SK-N-SH (cell line): ENCODE measurements at regions of chr2 and their contacts with region 1.

Region 1: GRCh38 chr2:217650716-217651360 is 352.0 kb downstream of the TNS1 start:
- DNase-seq: peak; percentile 55
- H3K4me3 ChIP-seq: no peak overlapping the region
- H3K27ac ChIP-seq: no peak overlapping the region
- H3K4me1 ChIP-seq: peaks cover 0 to 16% of the 10 kb centered on the region in 2 experiments; a peak in 2 of 4 replicates
- H3K27me3 ChIP-seq: no peaks in the 10 kb centered on the region
- CTCF ChIP-seq: peak; percentile 74
- EP300 ChIP-seq: no peak
- RAD21 ChIP-seq: peak; percentile 66

Region 2: GRCh38 chr2:216450784-216451183 is 1200.1 kb before region 1 on chr2:
- CTCF ChIA-PET with region 1: no interaction called
- POLR2A ChIA-PET with region 1: no interaction called
- DNase-seq: no peak
- H3K4me3 ChIP-seq: no peak overlapping the region
- H3K27ac ChIP-seq: no peak overlapping the region
- H3K4me1 ChIP-seq: no peaks in the 10 kb centered on the region
- H3K27me3 ChIP-seq: no peaks in the 10 kb centered on the region
- CTCF ChIP-seq: no peak
- EP300 ChIP-seq: no peak
- RAD21 ChIP-seq: no peak

Region 3: DNA sequence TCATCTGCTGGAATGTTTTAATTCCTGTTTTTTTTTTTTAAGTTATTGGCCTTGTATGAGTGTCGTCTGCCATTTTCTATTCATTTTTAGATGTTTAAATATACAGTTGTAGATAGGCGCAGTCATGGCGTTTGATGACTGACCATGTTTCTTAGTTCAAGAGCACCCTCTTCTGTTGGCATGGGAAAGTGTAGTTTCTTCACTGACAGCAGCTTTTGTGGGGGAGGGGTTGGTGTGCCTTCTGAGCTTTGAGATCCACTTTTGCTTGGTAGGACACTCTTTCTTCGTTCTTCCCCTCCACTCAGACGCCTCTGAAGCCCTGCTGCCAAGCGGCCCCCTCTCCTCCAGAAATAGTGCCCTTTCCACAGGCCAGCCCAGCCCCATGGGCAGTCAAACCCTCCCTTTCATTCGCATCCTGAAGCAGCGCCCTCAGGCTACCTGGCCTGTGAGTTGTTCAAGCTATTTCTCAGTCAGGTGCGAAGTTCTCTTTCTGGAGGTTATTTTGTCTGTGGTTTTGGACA is 140.0 kb before region 1 on chr2:
- CTCF ChIA-PET with region 1: interaction called, 14 read pairs
- POLR2A ChIA-PET with region 1: no interaction called
- DNase-seq: peak; percentile 78
- H3K4me3 ChIP-seq: no peak overlapping the region; a peak in 1 of 4 replicates
- H3K27ac ChIP-seq: peak overlapping the region in 1 of 2 experiments; percentile 48; a peak in 1 of 4 replicates
- H3K4me1 ChIP-seq: peaks cover 8 to 11% of the 10 kb centered on the region in 2 experiments; a peak in 3 of 4 replicates
- H3K27me3 ChIP-seq: no peaks in the 10 kb centered on the region
- CTCF ChIP-seq: peak; percentile 77
- EP300 ChIP-seq: no peak
- RAD21 ChIP-seq: peak; percentile 99

Region 4: DNA sequence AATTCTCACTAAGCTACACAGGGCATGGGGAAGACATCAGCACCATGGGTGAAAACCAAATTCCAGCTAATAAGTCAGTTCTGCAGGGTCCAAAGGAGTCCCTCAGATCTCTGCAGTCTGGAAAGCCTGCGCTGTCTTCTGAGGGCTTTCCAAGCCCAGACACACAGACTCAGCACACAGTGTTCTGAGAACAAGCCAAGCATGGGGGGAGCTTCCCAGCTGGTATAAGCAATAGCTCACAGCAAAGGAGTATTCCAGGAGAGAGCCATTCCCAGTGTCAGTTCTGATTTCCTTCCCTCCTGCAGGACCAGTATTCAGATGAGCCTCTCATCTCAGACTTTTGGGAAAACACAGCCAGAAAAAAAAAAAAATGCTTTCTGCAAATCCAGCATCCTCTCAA is 18.8 kb before region 1 on chr2:
- CTCF ChIA-PET with region 1: interaction called, 39 read pairs
- POLR2A ChIA-PET with region 1: no interaction called
- DNase-seq: no peak
- H3K4me3 ChIP-seq: no peak overlapping the region
- H3K27ac ChIP-seq: no peak overlapping the region
- H3K4me1 ChIP-seq: peaks cover 0 to 9% of the 10 kb centered on the region in 2 experiments; a peak in 1 of 4 replicates
- H3K27me3 ChIP-seq: no peaks in the 10 kb centered on the region
- CTCF ChIP-seq: no peak
- EP300 ChIP-seq: no peak
- RAD21 ChIP-seq: no peak

Region 5: DNA sequence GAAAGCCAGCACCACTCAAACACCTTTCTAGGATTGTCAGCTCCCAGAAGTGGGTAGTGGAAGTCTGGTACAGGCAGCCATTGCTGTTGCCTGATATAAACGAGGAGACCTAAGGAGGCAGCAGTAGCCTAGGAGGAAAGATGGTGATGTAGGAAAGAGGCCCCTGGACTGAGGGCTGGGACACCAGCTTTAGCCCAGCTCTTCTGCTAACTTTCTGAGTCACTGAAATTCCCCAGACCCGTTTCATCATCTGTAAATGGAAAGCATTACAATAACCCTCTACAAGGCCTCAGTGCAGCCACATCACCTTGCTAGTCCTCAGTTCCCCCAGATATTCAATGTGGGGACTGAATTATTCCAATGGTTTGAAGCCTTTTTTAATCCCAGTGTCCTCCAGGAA is 15.5 kb after region 1 on chr2:
- CTCF ChIA-PET with region 1: interaction called, 28 read pairs
- POLR2A ChIA-PET with region 1: no interaction called
- DNase-seq: no peak
- H3K4me3 ChIP-seq: no peak overlapping the region
- H3K27ac ChIP-seq: no peak overlapping the region
- H3K4me1 ChIP-seq: peaks cover 0 to 2% of the 10 kb centered on the region in 2 experiments; a peak in 1 of 4 replicates
- H3K27me3 ChIP-seq: no peaks in the 10 kb centered on the region
- CTCF ChIP-seq: no peak
- EP300 ChIP-seq: no peak
- RAD21 ChIP-seq: no peak

Region 6: GRCh38 chr2:217713395-217714286 is 62.8 kb after region 1 on chr2:
- CTCF ChIA-PET with region 1: interaction called, 27 read pairs
- POLR2A ChIA-PET with region 1: no interaction called
- DNase-seq: peak; percentile 79
- H3K4me3 ChIP-seq: peak overlapping the region in 1 of 2 experiments; percentile 14; a peak in 1 of 4 replicates
- H3K27ac ChIP-seq: peak overlapping the region; percentile 22 to 46; a peak in 2 of 4 replicates
- H3K4me1 ChIP-seq: peaks cover 26 to 28% of the 10 kb centered on the region in 2 experiments; a peak in 3 of 4 replicates
- H3K27me3 ChIP-seq: no peaks in the 10 kb centered on the region
- CTCF ChIP-seq: peak; percentile 96
- EP300 ChIP-seq: peak in 1 of 2 experiments; percentile 32; a peak in 1 of 4 replicates
- RAD21 ChIP-seq: peak; percentile 98

Region 7: DNA sequence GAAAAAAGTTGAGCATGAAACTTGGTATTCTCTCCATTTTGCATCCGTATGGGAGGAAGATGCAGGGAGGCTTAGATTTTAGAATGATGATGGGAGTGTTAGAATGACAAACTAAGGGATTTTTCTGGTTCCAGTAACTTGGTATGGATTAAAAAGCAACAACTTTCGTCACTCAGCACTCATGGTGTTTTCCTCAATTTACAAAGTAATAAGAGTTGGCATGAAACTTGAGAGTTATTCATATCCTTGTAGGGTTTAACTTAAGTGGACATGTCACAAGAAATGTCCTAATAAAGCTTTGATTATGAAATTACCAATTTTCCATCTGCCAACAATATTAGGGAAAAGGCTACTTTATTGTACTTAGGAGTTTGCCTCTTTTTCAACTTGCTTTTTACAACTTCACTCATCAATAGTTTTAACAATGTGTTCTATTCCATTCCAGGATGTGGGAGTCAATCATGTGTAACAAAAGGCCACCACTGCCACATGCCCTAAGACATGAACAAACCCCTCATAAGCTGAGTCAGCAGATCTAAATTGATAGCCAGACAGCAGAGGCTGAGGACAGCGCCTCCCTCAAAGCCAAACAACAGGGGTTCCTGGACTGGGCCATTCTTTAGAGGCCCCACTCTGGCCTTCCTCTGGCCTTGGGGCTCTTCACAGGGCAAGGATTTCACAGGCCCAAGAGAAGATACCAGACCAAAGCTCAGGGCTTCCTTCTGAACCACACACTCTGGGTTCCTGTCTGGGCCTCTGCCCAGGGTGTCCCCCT is 86.1 kb after region 1 on chr2:
- CTCF ChIA-PET with region 1: no interaction called
- POLR2A ChIA-PET with region 1: no interaction called
- DNase-seq: no peak
- H3K4me3 ChIP-seq: no peak overlapping the region
- H3K27ac ChIP-seq: no peak overlapping the region
- H3K4me1 ChIP-seq: peaks cover 16 to 25% of the 10 kb centered on the region in 2 experiments; a peak in 3 of 4 replicates
- H3K27me3 ChIP-seq: no peaks in the 10 kb centered on the region
- CTCF ChIP-seq: no peak
- EP300 ChIP-seq: no peak
- RAD21 ChIP-seq: no peak

Region 8: GRCh38 chr2:218244665-218245064 is 593.8 kb after region 1 on chr2:
- CTCF ChIA-PET with region 1: no interaction called
- POLR2A ChIA-PET with region 1: no interaction called
- DNase-seq: no peak
- H3K4me3 ChIP-seq: no peak overlapping the region
- H3K27ac ChIP-seq: no peak overlapping the region
- H3K4me1 ChIP-seq: no peaks in the 10 kb centered on the region
- H3K27me3 ChIP-seq: no peaks in the 10 kb centered on the region
- CTCF ChIP-seq: no peak
- EP300 ChIP-seq: no peak
- RAD21 ChIP-seq: no peak